AG04449 (cell line): ENCODE measurements at regions of chr15 and their contacts with region 1.

Region 1: DNA sequence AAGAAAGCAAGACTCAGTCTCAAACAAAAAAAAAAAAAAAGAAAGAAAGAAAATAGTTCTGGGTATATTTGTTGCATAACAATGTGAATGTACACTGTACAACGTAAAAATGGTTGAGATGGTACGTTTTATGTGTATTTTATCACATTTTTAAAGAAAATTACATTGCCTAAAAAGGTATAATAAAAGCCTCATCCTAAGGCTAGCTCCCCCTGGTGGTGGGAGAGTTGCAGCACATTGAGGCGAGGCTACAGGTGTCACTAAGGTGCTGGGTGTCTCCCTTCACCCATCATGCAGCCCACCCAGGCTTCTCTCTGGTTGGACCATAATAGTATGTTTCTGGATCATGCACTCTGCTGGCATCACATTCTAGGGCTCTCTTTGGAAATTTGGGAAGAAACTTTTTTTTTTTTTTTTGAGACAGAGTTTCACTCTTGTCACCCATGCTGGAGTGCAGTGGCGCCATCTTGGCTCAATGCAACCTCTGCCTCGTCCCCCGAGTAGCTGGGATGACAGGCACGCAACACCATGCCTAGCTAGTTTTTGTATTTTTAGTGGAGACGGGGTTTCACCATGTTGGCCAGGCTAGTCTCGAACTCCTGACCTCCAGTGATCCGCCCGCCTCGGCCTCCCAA is 12.4 kb upstream of the RAB11A start:
- DNase-seq: no peak
- H3K4me3 ChIP-seq: no peak overlapping the region
- CTCF ChIP-seq: peak; percentile 80

Region 2: GRCh38 chr15:65740148-65740547 is 116.8 kb before region 1 on chr15:
- CTCF ChIA-PET with region 1: no interaction called
- POLR2A ChIA-PET with region 1: no interaction called
- DNase-seq: no peak
- H3K4me3 ChIP-seq: no peak overlapping the region
- CTCF ChIP-seq: no peak

Region 3: GRCh38 chr15:65833501-65834205 is 23.3 kb before region 1 on chr15:
- CTCF ChIA-PET with region 1: interaction called, 14 read pairs
- POLR2A ChIA-PET with region 1: no interaction called
- DNase-seq: no peak
- H3K4me3 ChIP-seq: no peak overlapping the region
- CTCF ChIP-seq: no peak

Region 4: DNA sequence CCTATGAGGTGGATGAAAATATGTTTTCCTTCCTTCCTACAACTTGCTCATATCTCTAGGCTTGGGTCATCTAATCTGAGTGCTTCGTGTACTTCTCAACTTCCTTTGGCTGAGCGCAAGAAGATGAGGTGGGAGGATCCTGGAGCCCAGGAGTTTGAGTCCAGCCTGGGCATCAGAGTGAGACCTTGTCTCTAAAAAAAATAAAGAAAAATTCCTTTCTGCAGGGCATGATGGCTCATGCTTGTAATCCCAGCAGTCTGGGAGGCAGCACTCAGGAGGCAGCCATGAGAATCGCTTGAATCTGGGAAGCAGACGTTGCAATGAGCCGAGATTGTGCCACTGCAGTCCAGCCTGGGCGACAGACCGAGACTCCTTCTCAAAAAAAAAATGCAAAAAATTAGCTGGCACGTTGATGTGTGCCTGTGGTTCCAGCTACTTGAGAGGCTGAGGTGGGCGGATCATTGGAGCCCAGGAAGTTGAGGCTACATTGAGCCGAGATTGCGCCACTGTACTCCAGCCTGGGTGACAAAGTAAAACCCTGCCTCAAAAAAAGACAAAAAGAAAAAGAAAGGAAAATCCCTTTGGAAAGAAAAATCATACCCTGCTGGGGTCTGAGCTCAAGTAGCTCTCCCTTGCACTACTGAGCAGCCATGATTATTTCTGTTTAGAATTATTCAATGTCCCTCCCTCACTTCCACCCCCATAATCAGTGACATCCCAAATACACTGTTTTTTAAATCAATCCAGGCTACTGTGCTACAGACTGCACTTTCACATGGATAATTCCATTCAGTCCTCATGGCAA is 15.6 kb before region 1 on chr15:
- CTCF ChIA-PET with region 1: interaction called, 30 read pairs
- POLR2A ChIA-PET with region 1: no interaction called
- DNase-seq: no peak
- H3K4me3 ChIP-seq: peak overlapping the region; percentile 35
- CTCF ChIP-seq: no peak

Region 5: DNA sequence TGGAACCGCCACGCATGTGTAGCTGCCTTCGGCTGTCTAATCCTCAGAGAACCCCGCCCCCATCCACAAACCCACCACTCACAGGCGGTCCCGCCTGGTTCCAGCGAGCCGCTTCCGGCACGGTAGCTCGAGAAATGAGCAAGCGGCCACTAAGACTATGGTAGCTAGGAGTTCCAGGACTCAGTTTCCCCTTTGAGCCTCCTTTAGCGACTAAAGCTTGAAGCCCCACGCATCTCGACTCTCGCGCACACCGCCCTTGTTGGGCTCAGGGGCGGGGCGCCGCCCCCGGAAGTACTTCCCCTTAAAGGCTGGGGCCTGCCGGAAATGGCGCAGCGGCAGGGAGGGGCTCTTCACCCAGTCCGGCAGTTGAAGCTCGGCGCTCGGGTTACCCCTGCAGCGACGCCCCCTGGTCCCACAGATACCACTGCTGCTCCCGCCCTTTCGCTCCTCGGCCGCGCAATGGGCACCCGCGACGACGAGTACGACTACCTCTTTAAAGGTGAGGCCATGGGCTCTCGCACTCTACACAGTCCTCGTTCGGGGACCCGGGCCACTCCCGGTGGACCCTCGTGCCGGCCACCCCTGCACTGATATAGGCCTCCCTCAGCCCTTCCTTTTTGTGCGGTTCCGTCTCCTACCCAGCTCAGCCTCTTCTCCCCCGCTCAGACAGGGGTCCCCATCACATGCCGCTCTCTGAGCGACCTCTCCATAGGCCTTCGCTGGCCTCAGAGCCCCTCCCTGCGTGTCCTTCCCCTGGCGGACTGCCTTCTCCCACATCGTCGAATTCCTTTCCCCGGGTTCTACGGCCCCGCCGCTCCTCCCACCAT is 12.4 kb after region 1 on chr15 and contains the start of gene RAB11A:
- CTCF ChIA-PET with region 1: interaction called, 35 read pairs
- POLR2A ChIA-PET with region 1: interaction called, 6 read pairs
- DNase-seq: peak; percentile 78
- H3K4me3 ChIP-seq: peak within 1 kb of the TSS; percentile 97
- CTCF ChIP-seq: peak; percentile 62

Region 6: DNA sequence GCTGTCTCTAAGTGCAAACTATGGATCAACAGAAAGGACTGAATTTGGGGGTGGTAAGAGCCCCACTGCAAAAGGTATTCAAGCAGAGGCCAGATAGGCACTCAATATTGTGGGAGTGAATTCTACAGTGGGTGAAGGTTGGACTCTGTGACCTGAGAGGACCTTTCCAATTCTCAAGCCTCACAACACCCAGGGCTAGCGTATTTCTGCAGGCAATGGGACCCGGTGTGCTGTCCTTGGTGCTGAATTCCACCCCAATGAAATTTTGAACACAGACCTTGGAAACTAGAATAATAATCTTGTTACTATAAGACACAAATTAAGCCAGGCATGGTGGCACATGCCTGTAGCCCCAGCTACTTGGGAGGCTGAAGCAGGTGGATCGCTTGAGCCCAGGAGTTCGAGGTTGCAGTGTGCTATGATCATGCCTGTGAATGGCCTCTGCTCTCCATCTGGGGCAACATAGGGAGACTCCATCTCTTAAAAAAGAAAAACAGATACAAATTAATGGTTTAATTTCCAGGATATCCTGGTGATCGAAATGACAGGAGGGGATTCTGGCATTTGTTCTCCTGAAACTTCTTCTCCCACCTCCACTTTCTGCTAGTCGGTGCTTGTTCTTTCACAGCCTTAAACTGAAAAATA is 147.8 kb after region 1 on chr15:
- CTCF ChIA-PET with region 1: no interaction called
- POLR2A ChIA-PET with region 1: no interaction called
- DNase-seq: no peak
- H3K4me3 ChIP-seq: no peak overlapping the region
- CTCF ChIP-seq: no peak